ENCODE measurements at regions of chr1 and their contacts with region 1.

Region 1: GRCh38 chr1:32650752-32651460 is at the start of gene RBBP4:
- DNase-seq: peak; percentile 99
- ATAC-seq: peak; percentile 82
- H3K4me3 Mint-ChIP-seq: peak within 1 kb of the TSS; percentile 97
- H3K27ac Mint-ChIP-seq: peak within 1 kb of the TSS; percentile 100
- H3K4me1 Mint-ChIP-seq: peaks cover 70% of the 10 kb centered on the region
- H3K27me3 Mint-ChIP-seq: no peaks in the 10 kb centered on the region
- CTCF ChIP-seq: no peak
- total RNA-seq, gene RBBP4: 228 and 241 TPM in 2 replicates

Region 2: GRCh38 chr1:32351399-32352238 is 299.3 kb before region 1 on chr1:
- CTCF ChIA-PET with region 1: no interaction called
- POLR2A ChIA-PET with region 1: interaction called, 12 read pairs
- intact Hi-C with region 1: no loop called
- DNase-seq: peak; percentile 90
- ATAC-seq: peak; percentile 96
- H3K4me3 Mint-ChIP-seq: peak overlapping the region; percentile 91
- H3K27ac Mint-ChIP-seq: peak overlapping the region; percentile 91
- H3K4me1 Mint-ChIP-seq: peaks cover 22% of the 10 kb centered on the region
- H3K27me3 Mint-ChIP-seq: no peaks in the 10 kb centered on the region
- CTCF ChIP-seq: no peak

Region 3: DNA sequence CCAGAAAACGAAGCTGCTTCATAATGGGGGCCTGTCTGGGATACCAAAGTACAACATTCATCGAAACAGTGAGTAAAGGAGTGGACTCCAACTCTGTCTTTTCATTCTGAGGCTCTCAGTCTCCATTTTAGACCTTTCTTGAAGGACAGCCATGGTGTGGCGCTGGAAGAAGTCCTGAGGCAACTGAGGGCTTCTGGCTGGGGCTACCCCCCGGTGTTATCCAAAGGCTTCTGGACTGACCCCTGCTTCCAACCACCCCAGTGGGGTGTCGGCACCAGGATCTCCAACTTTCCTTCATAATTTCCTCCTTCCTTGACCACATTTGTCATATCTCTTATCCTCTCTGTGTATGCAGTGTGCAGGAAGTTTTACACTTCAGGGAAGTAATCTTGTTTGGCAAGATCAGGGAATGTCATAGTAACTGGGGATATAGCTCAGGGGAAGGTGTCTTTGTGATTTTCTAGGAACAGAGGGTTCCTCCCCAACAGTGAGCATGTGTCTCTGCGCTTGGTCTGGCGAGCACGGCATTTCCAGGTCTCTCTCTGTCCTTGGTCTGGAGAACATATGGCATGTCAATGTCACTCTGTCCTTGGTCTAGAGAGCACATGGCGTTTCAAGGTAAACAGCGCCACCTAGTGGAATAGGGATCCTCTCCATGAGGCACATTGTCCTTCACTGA is 237.3 kb before region 1 on chr1:
- CTCF ChIA-PET with region 1: no interaction called
- POLR2A ChIA-PET with region 1: interaction called, 10 read pairs
- intact Hi-C with region 1: no loop called
- DNase-seq: peak; percentile 28
- ATAC-seq: peak; percentile 88
- H3K4me3 Mint-ChIP-seq: no peak overlapping the region
- H3K27ac Mint-ChIP-seq: no peak overlapping the region
- H3K4me1 Mint-ChIP-seq: peaks cover 3% of the 10 kb centered on the region
- H3K27me3 Mint-ChIP-seq: peaks cover 15% of the 10 kb centered on the region
- CTCF ChIP-seq: no peak

Region 4: DNA sequence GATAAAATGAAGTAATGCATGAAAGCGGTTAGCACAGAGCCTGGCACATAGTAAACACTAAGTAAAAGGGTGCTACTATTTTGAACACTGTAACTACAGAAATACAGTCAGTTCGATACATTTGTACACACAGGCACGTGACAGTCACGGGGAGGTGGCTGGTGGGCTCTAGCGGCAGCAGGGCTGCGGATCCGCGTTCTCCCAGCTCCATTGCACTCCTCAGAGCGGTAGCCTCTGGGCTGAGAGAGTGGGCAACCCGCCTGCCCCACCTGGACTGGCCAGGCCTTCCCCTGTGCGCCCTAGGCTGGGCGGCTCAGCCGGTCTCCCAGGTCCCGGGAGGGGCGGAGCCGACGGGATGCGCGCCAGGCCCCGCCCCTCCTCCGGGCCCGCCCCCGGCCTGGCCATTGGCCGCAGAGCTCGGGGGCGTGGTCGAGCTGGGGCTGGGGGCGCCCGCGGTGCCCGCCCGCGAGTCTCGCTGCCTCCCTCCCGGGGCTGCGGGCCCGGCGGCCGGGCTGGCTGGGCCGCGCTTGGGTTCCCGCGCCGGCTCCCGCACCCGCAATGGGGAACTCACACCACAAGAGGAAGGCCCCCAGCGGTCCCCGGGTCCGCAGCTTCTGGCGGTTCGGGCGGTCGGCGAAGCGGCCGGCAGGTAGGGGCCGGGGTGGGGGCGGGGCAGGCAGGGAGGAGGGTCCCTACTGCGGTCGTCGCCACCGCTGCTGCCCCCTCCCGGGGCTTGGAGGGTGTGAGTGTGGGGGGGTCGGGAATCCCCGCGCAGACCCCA is 102.8 kb after region 1 on chr1:
- CTCF ChIA-PET with region 1: no interaction called
- POLR2A ChIA-PET with region 1: no interaction called
- intact Hi-C with region 1: loop called (anchors 5 kb)
- DNase-seq: peak; percentile 77
- ATAC-seq: peak; percentile 96
- H3K4me3 Mint-ChIP-seq: peak overlapping the region; percentile 74
- H3K27ac Mint-ChIP-seq: no peak overlapping the region
- H3K4me1 Mint-ChIP-seq: peaks cover 11% of the 10 kb centered on the region
- H3K27me3 Mint-ChIP-seq: peaks cover 13% of the 10 kb centered on the region
- CTCF ChIP-seq: no peak

Region 5: DNA sequence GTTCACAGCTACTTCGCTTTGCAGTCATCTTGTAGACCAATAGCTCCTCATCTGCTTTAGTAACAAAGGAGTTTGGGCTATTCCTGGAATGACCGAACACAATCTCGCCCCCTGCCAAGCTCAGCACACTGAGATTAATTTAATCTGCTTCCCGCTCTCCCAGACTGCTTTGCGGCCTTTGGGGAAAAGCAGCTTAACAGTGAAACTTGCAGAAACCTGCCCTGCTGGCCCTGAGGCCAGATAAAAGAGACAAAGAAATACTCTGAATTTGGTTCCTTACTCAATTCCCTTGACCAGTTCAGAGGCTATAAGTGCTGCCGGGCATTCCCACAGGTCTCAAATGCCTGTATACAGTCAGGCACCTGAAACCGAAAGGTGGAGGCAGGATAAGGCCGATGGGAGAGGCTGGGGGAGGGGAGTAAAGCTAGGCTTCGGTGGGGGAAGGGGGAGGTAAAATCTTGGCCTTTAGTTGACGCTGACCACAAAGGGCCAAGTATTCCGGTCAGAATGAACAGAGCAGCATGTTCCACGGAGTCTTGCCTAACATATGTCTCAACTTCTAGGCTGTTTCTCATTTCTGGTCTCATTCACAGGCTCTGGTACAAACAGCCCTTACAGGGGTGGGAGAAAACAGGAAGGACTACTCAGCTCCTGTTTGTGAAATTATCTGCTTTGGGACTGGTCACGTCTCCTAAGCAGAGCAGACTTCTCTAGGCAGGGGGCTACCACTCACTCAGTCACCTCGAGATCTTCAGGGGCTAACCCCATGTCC is 687.7 kb after region 1 on chr1:
- CTCF ChIA-PET with region 1: no interaction called
- POLR2A ChIA-PET with region 1: no interaction called
- intact Hi-C with region 1: no loop called
- DNase-seq: no peak
- ATAC-seq: no peak
- H3K4me3 Mint-ChIP-seq: no peak overlapping the region
- H3K27ac Mint-ChIP-seq: no peak overlapping the region
- H3K4me1 Mint-ChIP-seq: peaks cover 18% of the 10 kb centered on the region
- H3K27me3 Mint-ChIP-seq: no peaks in the 10 kb centered on the region
- CTCF ChIP-seq: no peak